ENCODE measurements at regions of chr4 and their contacts with region 1.

Region 1: DNA sequence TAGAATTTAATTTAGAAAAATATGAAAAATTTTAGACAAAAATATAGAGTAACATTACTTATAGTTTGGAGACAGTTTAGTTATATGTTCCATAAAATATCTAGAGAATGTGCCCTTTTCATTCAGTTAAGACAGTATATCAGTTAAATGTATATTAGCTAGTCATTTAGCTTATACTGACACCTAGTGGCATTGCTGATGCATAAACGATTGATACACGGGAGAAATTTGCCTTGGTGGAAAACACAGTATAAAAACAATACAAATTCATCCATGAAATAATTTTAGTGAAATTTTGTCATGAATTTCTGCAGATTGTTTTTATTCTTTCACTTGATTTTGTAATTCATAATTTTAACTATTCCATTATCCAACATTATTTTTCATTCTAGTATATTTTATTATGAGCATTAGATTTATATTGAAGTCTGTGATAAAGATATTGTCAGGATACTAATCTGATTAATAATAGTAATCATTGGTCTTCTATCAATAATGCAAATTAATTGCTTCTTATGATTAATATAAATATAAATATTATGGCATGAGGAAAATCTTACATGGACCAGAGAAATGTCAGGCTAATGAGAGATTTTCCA is 219.0 kb downstream of the TLL1 start:
- DNase-seq: peak; percentile 28
- ATAC-seq: peak; percentile 49; the same call in 1 of the 3 replicates
- H3K4me3 ChIP-seq: no peak overlapping the region
- H3K27ac ChIP-seq: no peak overlapping the region
- H3K4me1 ChIP-seq: no peaks in the 10 kb centered on the region
- H3K27me3 ChIP-seq: peaks cover 0 to 2% of the 10 kb centered on the region in 2 experiments; a peak in 1 of 5 replicates
- CTCF ChIP-seq: peak; percentile 67
- EP300 ChIP-seq: no peak
- POLR2A ChIP-seq: no peak
- RAD21 ChIP-seq: 0 out of 2 replicates have a peak, but pooled peaks have one; percentile 22

Region 2: GRCh38 chr4:165493359-165493758 is 598.7 kb before region 1 on chr4:
- CTCF ChIA-PET with region 1: no interaction called
- POLR2A ChIA-PET with region 1: no interaction called
- in situ Hi-C with region 1: no loop called
- intact Hi-C with region 1: loop called (anchors 5 kb)
- DNase-seq: peak; percentile 27
- ATAC-seq: peak; percentile 87
- H3K4me3 ChIP-seq: no peak overlapping the region
- H3K27ac ChIP-seq: no peak overlapping the region
- H3K4me1 ChIP-seq: no peaks in the 10 kb centered on the region
- H3K27me3 ChIP-seq: no peaks in the 10 kb centered on the region
- CTCF ChIP-seq: peak; percentile 71
- EP300 ChIP-seq: no peak
- POLR2A ChIP-seq: no peak
- RAD21 ChIP-seq: peak; percentile 43; the same call in 1 of the 2 replicates

Region 3: DNA sequence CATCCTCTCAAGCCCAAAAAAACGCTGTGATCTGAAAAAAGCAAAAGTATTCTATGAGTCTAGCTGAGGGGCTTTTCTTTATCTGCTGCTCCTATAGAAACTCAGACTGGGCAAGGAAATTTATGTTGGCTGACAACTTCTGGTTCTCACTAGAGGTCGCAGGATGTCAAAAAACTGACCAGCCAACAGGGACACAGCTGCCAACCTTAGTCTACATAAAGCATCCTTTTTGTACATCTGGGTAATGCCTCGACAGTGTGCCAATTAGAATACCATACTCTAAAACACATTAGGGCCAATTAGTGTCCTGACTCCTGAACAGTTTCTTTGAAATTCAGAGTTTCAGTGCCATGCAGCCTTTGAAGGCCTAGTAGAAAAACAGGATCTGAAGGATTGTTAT is 227.7 kb before region 1 on chr4:
- CTCF ChIA-PET with region 1: no interaction called
- POLR2A ChIA-PET with region 1: no interaction called
- in situ Hi-C with region 1: loop called (anchors 10 kb)
- intact Hi-C with region 1: loop called (anchors 1 kb)
- DNase-seq: peak; percentile 20
- ATAC-seq: peak; percentile 57
- H3K4me3 ChIP-seq: no peak overlapping the region
- H3K27ac ChIP-seq: no peak overlapping the region
- H3K4me1 ChIP-seq: no peaks in the 10 kb centered on the region
- H3K27me3 ChIP-seq: no peaks in the 10 kb centered on the region
- CTCF ChIP-seq: peak; percentile 46
- EP300 ChIP-seq: no peak
- POLR2A ChIP-seq: no peak
- RAD21 ChIP-seq: no peak

Region 4: DNA sequence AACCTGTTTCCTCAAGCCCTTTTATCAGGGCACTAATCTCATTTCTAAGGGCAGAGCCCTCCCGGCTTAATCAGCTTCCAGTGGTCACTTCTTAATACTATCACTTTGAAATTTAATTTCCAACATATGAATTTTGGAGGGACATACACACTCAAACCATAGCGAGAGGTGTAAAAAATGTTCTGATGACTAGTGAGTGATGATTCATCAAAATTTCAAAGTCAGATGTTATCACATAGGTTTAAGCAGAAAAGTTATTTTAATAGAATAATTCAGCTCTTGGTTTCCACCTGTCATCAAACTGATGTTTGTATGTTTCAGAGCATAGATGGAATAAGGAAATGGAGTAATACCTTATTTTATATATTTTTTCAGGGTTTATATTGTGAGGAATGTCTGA is 57.0 kb before region 1 on chr4:
- CTCF ChIA-PET with region 1: no interaction called
- POLR2A ChIA-PET with region 1: no interaction called
- in situ Hi-C with region 1: no loop called
- intact Hi-C with region 1: no loop called
- DNase-seq: no peak
- ATAC-seq: no peak
- H3K4me3 ChIP-seq: no peak overlapping the region
- H3K27ac ChIP-seq: no peak overlapping the region
- H3K4me1 ChIP-seq: no peaks in the 10 kb centered on the region
- H3K27me3 ChIP-seq: no peaks in the 10 kb centered on the region
- CTCF ChIP-seq: no peak
- EP300 ChIP-seq: no peak
- POLR2A ChIP-seq: no peak
- RAD21 ChIP-seq: no peak

Measured in HepG2 (cell line).